A549 (cell line): ENCODE measurements at regions of chr19 and their contacts with region 1.

Region 1: DNA sequence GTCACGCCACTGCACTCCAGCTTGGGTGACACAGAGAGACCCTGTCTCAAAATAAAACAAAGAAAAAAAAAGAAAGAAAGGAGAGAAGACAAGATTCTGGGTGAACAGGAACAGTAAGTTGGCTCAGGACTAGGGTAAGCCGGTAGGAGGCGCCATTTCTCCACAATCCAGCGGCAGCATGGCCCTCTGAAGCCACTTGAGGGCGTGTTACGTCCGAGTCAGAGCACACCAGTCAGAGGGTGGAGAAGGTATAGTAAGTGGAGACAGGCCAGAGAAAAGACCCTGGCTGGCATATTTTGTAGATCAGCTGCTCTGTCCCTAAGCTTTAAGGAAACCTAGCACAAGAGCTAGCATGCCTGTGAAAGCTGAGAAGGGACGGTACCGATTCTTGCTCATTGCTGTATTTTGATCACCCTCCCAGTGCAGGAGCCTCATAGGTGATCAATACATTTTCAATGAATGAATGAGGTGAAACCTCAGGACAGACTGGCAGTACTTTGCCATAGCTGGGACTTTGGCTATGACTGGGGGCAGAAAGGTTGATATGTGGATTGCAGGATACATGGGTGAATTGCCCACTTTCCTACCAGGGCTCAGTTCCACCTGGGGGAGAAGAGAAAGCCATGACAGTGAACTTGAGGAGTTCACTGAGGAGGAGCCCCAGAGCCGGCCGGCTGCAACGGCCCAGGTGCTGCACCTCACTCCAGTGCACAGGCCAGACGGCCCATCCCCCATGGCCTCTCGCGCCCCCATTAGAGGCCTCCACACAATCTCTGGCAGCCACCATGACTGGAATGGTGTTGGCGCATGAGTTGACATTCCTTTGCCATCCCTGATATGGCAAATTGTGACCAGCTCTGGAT is 23.5 kb downstream of the POU2F2 start:
- DNase-seq: peak; percentile 95 to 98
- ATAC-seq: peak; percentile 81 to 91
- H3K4me3 ChIP-seq: no peak overlapping the region
- H3K27ac ChIP-seq: peak overlapping the region in 1 of 2 experiments; percentile 11; a peak in 1 of 6 replicates
- H3K4me1 ChIP-seq: peaks cover 18% of the 10 kb centered on the region
- CTCF ChIP-seq: peak; percentile 100
- EP300 ChIP-seq: no peak
- POLR2A ChIP-seq: no peak
- RAD21 ChIP-seq: peak; percentile 100

Region 2: DNA sequence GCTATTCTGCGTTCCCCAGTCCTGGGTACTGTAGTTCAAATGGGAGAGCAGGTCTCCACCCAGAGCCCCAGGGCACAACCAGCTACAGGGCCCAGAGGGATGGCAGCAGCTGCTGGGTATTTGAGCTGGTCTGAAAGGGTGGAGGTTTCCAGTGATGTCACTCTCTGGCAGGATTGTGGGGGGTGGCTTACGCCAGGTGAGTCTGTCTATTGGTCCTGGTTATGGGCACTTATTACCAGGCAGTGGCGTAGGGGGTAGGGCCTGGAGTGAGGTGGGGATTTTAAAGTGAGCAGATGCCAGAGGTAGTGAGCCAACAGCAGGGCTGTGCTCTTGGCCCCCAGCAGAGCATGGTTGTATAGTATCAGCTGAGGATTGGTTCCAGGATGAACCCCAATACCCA is 242.5 kb before region 1 on chr19:
- CTCF ChIA-PET with region 1: no interaction called
- POLR2A ChIA-PET with region 1: no interaction called
- DNase-seq: no peak
- ATAC-seq: peak in 1 of 2 experiments; percentile 1; a peak in 3 of 6 replicates
- H3K4me3 ChIP-seq: no peak overlapping the region
- H3K27ac ChIP-seq: peak overlapping the region in 1 of 2 experiments; percentile 25; a peak in 2 of 6 replicates
- H3K4me1 ChIP-seq: peaks cover 91% of the 10 kb centered on the region
- CTCF ChIP-seq: no peak
- EP300 ChIP-seq: no peak
- POLR2A ChIP-seq: no peak
- RAD21 ChIP-seq: no peak

Region 3: DNA sequence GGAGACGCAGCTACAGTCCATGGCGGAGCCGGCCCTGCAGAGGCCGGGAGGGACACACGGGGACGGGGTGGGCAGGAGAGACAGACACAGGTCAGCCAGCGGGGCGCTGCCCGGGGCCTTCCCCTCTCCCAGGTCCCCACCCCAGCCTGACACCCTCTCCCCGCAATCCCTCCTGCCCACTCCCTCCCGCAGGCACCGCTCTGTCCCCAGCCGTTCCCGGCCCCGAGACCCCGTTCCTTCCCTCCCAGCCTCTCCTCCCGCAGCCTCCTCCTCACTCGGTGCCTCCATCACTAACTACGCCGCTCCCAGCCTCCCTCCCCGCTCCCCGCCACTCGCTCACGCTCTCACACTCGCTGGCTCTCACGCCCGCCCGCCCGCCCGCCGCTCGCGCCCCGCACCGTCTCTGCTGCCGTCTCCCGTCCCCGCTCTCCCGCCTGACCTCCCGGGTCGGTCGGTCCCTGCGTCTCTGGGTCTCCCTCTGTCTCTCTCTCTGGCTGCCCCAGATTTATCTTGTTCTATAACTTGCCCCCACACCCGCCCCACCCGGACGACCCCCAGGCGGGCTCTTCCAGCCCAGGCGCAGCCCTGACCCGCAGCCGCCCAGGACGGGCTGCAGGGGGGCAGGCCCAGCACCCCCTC is 195.7 kb before region 1 on chr19:
- CTCF ChIA-PET with region 1: no interaction called
- POLR2A ChIA-PET with region 1: no interaction called
- DNase-seq: no peak
- ATAC-seq: peak; percentile 17 to 61; a peak in 5 of 6 replicates
- H3K4me3 ChIP-seq: no peak overlapping the region
- H3K27ac ChIP-seq: peak overlapping the region in 1 of 2 experiments; percentile 1; a peak in 1 of 6 replicates
- H3K4me1 ChIP-seq: peaks cover 17% of the 10 kb centered on the region
- CTCF ChIP-seq: no peak
- EP300 ChIP-seq: no peak
- POLR2A ChIP-seq: no peak
- RAD21 ChIP-seq: no peak

Region 4: GRCh38 chr19:42092350-42092749 is 16.4 kb before region 1 on chr19:
- CTCF ChIA-PET with region 1: interaction called, 386 read pairs
- POLR2A ChIA-PET with region 1: no interaction called
- DNase-seq: peak; percentile 70 to 81
- ATAC-seq: peak; percentile 59 to 81
- H3K4me3 ChIP-seq: no peak overlapping the region
- H3K27ac ChIP-seq: peak overlapping the region in 1 of 2 experiments; percentile 11; a peak in 1 of 6 replicates
- H3K4me1 ChIP-seq: peaks cover 24% of the 10 kb centered on the region
- CTCF ChIP-seq: peak; percentile 76
- EP300 ChIP-seq: no peak
- POLR2A ChIP-seq: no peak
- RAD21 ChIP-seq: peak; percentile 56 to 82

Region 5: GRCh38 chr19:42176990-42177685 is 68.4 kb after region 1 on chr19:
- CTCF ChIA-PET with region 1: interaction called, 213 read pairs
- POLR2A ChIA-PET with region 1: no interaction called
- DNase-seq: peak; percentile 90
- ATAC-seq: peak; percentile 84 to 95
- H3K4me3 ChIP-seq: peak overlapping the region; percentile 56
- H3K27ac ChIP-seq: peak overlapping the region in 1 of 2 experiments; percentile 52; a peak in 2 of 6 replicates
- H3K4me1 ChIP-seq: peaks cover 16% of the 10 kb centered on the region
- CTCF ChIP-seq: peak; percentile 73
- EP300 ChIP-seq: no peak
- POLR2A ChIP-seq: no peak
- RAD21 ChIP-seq: peak in 1 of 2 experiments; percentile 39; a peak in 2 of 5 replicates

Region 6: DNA sequence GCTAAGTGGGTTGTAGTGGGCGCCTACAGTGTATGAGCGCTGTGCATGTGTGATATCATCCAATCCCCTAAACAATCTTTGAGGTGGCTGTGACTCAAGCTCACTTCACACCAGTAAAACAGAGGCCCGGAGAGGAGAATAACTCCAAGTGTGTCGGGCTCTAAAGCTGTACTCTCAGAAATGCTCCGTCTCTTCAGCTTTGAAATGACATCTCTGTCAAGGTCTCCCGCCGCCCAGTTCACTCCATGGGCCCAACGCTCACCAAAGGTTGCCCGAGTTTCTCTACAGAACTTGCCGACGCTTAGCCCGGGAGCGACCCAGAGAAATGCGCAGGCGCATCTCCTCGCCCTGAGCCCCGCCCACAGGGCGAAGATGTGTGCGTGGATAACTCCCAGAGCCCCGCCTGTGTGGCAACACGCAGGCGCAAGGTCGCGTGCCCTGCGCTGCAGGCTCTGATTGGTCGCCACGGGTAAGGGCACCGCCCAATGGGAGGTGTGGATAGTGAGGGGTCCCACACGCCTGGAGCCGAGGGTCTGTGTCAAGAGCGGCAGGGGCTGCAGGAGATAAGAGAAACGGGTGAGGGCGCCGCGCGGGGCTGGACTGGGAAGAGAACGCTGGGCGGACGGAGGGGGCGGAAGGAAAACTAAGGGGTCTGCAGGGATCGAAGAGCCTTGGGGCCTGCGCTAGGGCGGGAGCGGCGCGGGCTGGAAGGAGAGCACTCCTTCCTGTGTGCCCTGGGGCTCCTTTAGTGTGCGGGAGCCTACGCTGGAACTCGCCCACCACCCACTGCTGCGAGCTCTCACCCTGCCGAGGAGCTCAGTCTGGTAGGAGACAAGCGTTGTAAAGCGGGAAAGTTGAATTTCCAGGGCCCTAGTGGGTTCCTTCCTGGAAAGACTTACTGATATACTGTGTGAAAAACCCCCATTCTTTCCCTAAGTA is 111.3 kb after region 1 on chr19 and contains the start of gene ZNF526:
- CTCF ChIA-PET with region 1: interaction called, 17 read pairs
- POLR2A ChIA-PET with region 1: interaction called, 3 read pairs
- DNase-seq: peak; percentile 100
- ATAC-seq: peak; percentile 81 to 92
- H3K4me3 ChIP-seq: peak within 1 kb of the TSS; percentile 77
- H3K27ac ChIP-seq: peak within 1 kb of the TSS; percentile 85 to 89
- H3K4me1 ChIP-seq: peaks cover 39% of the 10 kb centered on the region
- CTCF ChIP-seq: no peak
- EP300 ChIP-seq: no peak
- POLR2A ChIP-seq: peak; percentile 87
- RAD21 ChIP-seq: no peak
- polyA plus RNA-seq, gene ZNF526: 7.1 and 8.7 TPM in 2 replicates

Region 7: DNA sequence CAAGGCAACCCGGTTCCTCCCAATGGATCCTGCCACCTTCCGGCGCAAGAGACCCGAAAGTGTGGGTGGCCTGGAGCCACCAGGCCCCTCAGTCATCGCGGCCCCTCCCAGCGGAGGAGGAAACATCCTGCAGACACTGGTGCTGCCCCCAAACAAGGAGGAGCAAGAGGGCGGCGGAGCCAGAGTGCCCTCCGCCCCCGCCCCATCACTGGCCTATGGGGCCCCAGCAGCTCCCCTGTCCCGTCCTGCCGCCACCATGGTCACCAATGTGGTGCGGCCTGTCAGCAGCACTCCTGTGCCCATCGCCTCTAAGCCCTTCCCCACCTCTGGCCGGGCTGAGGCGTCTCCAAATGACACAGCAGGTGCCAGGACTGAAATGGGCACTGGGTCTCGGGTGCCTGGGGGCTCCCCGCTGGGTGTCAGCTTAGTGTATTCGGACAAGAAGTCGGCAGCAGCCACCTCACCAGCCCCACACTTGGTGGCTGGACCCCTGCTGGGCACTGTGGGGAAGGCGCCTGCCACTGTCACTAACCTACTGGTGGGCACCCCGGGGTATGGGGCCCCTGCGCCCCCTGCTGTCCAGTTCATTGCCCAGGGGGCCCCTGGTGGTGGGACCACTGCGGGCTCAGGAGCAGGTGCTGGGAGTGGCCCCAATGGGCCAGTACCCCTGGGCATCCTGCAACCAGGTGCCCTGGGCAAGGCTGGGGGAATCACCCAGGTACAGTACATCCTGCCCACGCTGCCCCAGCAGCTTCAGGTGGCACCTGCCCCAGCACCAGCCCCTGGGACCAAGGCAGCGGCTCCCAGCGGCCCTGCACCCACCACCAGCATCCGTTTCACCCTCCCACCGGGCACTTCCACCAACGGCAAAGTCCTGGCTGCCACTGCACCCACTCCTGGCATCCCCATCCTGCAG is 182.0 kb after region 1 on chr19:
- CTCF ChIA-PET with region 1: interaction called, 27 read pairs
- POLR2A ChIA-PET with region 1: no interaction called
- DNase-seq: peak; percentile 79 to 95
- ATAC-seq: peak; percentile 48 to 83
- H3K4me3 ChIP-seq: no peak overlapping the region
- H3K27ac ChIP-seq: no peak overlapping the region
- H3K4me1 ChIP-seq: peaks cover 16% of the 10 kb centered on the region
- CTCF ChIP-seq: peak; percentile 88
- EP300 ChIP-seq: no peak
- POLR2A ChIP-seq: no peak; the same call in 1 of the 2 replicates
- RAD21 ChIP-seq: peak; percentile 76 to 78; a peak in 4 of 5 replicates

Region 8: GRCh38 chr19:42423462-42424344 is 314.9 kb after region 1 on chr19:
- CTCF ChIA-PET with region 1: interaction called, 12 read pairs
- POLR2A ChIA-PET with region 1: no interaction called
- DNase-seq: peak; percentile 94 to 100
- ATAC-seq: peak; percentile 80 to 96
- H3K4me3 ChIP-seq: peak overlapping the region; percentile 48
- H3K27ac ChIP-seq: peak overlapping the region; percentile 52 to 78
- H3K4me1 ChIP-seq: peaks cover 18% of the 10 kb centered on the region
- CTCF ChIP-seq: no peak
- EP300 ChIP-seq: no peak
- POLR2A ChIP-seq: no peak
- RAD21 ChIP-seq: no peak